H1 (cell line): ENCODE measurements at regions of chr9 and their contacts with region 1.

Region 1: DNA sequence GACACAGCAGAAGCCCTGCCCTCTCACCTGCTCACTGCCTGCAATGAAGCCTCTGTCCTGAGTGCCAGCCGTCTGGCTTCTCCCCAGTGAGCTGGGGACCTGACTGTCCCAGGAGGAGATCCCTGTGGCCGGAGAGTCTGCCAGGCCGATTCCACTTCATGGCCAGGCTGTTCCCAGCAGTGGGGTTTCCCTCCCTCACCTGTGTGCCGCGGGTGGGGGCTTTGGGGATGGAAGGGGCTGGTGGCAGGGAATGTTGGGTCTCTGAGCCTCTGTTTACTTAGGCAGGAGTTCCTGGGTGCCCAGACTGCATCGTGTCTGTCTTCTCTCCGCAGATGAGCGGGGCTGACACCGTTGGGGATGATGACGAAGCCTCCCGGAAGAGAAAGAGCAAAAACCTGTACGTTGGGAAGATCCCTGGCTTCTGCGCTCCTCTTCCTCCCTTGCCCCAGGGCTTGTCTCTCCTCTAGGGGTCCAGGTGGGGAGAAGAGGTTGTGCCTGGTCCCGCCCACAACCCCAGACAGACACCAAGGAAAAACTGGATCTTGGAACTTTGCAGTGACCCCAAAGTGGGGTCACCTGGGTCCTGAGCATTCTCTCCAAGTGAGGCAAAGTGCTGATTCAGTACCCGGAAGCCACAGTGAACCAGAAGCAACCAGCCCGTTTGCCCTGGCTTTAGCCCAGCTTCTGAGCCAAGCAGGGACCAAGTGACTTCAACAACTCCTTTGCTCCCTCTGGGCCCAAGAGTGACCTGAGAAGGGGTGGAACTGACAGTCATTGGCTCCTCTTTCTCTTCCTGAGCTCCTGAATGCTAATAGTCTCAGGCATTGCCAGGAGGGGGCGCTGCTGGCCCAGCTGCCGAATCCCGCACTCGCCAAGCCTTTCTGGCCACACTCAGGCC is 127.7 kb downstream of the RGS3 start:
- DNase-seq: peak; percentile 60 to 94
- H3K4me3 ChIP-seq: no peak overlapping the region
- H3K27ac ChIP-seq: no peak overlapping the region
- H3K4me1 ChIP-seq: peaks cover 10 to 23% (median 15%) of the 10 kb centered on the region in 4 experiments
- H3K27me3 ChIP-seq: no peaks in the 10 kb centered on the region
- CTCF ChIP-seq: peak in 2 of 3 experiments; percentile 96 to 97; a peak in 3 of 4 replicates
- EP300 ChIP-seq: peak; percentile 12 to 47; a peak in 1 of 3 replicates
- POLR2A ChIP-seq: no peak
- RAD21 ChIP-seq: peak; percentile 99 to 100

Region 2: DNA sequence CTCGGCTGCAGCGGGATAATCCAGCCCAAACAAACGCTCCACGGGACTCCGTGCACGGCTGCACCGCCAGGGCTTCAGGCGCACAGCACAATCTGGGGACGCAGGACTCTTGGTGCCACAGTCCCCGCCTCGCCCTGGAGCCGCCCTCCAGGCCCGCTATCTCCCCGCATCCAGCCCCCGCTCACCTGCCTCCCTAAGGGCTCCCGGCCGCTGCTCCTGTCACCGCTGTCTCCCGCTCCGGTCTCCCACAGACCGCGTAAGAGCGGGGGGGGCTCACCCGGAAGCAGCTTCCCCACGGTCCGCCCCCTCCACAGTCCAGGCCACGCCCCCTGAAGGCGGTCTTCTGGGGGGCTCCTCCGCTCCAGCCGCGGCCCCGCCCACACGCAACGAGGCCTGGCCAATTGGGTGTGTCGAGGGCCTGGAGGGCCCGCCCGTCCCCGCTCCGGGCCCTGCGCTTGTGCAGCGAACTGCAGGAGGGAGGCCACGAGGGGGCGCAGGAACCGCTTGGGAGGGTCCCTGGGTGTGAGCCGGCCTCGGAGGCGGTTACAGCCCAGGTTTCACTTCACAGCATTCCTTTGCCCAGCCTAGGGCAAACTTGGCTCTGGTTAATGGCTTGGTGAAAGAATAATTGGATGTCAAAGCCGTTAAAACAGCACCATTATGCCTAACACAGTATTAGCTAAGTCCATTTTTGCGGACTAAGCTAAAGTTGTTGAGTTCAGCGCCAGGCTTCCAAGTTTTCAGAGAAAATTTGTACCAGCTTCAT is 190.0 kb before region 1 on chr9 and contains the start of gene ALAD:
- CTCF ChIA-PET with region 1: interaction called, 10 read pairs
- POLR2A ChIA-PET with region 1: interaction called, 3 read pairs
- DNase-seq: peak; percentile 93 to 100
- H3K4me3 ChIP-seq: peak within 1 kb of the TSS; percentile 70 to 95 (median 90)
- H3K27ac ChIP-seq: no peak within 1 kb of the TSS
- H3K4me1 ChIP-seq: peaks cover 0 to 2% (median 0%) of the 10 kb centered on the region in 4 experiments; a peak in 2 of 7 replicates
- H3K27me3 ChIP-seq: no peaks in the 10 kb centered on the region
- CTCF ChIP-seq: peak; percentile 81 to 93 (median 92)
- EP300 ChIP-seq: peak in 1 of 2 experiments; percentile 64; a peak in 1 of 3 replicates
- POLR2A ChIP-seq: no peak
- RAD21 ChIP-seq: peak; percentile 70 to 79
- total RNA-seq, gene ALAD: 13.0 and 15.3 TPM in 2 replicates

Region 3: DNA sequence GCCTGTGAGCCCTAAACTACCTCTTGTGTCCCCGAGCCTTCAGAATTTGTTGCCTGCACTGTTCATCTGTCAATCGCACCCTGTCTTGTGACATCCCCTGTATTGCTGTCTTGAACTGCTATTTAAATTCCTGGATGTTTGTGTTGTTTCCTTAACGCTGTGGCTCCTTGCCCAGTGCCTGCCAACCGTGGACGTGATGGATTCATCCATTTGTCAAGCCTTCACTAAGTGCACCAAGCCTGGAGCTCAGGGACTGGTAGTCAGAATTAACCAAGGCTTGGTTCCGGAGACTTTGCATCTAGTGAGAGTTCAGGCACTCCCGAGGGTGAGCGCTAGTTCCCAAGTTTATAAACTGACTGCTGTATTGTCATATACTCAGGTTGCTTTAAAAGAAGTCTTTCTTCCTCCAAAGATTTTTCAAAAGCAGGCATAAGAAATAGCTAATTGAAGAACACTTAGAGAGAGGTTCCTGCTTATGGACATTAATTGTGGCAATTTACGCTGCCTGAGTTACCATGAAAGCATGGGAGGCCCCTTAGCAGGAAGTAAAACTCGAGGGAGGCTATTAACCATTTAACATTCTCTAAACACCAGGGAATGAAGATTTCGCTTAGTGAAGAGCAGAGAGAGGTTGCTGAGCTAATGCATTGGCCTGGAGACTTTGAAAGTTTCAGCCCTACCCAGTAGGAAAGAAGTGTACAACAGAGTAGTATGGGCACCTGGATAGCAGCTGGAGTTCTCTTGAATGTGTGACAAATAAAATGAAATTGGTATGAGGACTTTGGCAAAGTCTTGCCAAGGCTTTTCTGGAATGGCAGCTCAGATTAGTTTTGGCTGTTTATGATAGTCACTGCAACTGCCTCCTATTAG is 98.7 kb before region 1 on chr9:
- CTCF ChIA-PET with region 1: interaction called, 16 read pairs
- POLR2A ChIA-PET with region 1: interaction called, 3 read pairs
- DNase-seq: no peak
- H3K4me3 ChIP-seq: no peak overlapping the region
- H3K27ac ChIP-seq: no peak overlapping the region
- H3K4me1 ChIP-seq: peaks cover 0 to 7% (median 3%) of the 10 kb centered on the region in 4 experiments; a peak in 4 of 7 replicates
- H3K27me3 ChIP-seq: no peaks in the 10 kb centered on the region
- CTCF ChIP-seq: no peak
- EP300 ChIP-seq: no peak
- POLR2A ChIP-seq: no peak
- RAD21 ChIP-seq: no peak

Region 4: GRCh38 chr9:113578882-113579282 is 12.4 kb before region 1 on chr9:
- CTCF ChIA-PET with region 1: interaction called, 59 read pairs
- POLR2A ChIA-PET with region 1: interaction called, 7 read pairs
- DNase-seq: no peak
- H3K4me3 ChIP-seq: no peak overlapping the region
- H3K27ac ChIP-seq: no peak overlapping the region
- H3K4me1 ChIP-seq: peaks cover 0 to 14% (median 7%) of the 10 kb centered on the region in 4 experiments; a peak in 6 of 7 replicates
- H3K27me3 ChIP-seq: no peaks in the 10 kb centered on the region
- CTCF ChIP-seq: no peak
- EP300 ChIP-seq: no peak
- POLR2A ChIP-seq: no peak
- RAD21 ChIP-seq: no peak

Region 5: GRCh38 chr9:113614843-113615648 is 23.8 kb after region 1 on chr9:
- CTCF ChIA-PET with region 1: interaction called, 130 read pairs
- POLR2A ChIA-PET with region 1: interaction called, 20 read pairs
- DNase-seq: no peak
- H3K4me3 ChIP-seq: no peak overlapping the region
- H3K27ac ChIP-seq: no peak overlapping the region
- H3K4me1 ChIP-seq: peaks cover 8 to 18% (median 10%) of the 10 kb centered on the region in 4 experiments
- H3K27me3 ChIP-seq: no peaks in the 10 kb centered on the region; a peak in 2 of 7 replicates
- CTCF ChIP-seq: no peak
- EP300 ChIP-seq: no peak
- POLR2A ChIP-seq: no peak
- RAD21 ChIP-seq: no peak